Activated CD4-positive, alpha-beta T cell treated with anti-CD3 and anti-CD28 coated beads for 36 hours (primary cell): ENCODE measurements at regions of chr19 and their contacts with region 1.

Region 1: DNA sequence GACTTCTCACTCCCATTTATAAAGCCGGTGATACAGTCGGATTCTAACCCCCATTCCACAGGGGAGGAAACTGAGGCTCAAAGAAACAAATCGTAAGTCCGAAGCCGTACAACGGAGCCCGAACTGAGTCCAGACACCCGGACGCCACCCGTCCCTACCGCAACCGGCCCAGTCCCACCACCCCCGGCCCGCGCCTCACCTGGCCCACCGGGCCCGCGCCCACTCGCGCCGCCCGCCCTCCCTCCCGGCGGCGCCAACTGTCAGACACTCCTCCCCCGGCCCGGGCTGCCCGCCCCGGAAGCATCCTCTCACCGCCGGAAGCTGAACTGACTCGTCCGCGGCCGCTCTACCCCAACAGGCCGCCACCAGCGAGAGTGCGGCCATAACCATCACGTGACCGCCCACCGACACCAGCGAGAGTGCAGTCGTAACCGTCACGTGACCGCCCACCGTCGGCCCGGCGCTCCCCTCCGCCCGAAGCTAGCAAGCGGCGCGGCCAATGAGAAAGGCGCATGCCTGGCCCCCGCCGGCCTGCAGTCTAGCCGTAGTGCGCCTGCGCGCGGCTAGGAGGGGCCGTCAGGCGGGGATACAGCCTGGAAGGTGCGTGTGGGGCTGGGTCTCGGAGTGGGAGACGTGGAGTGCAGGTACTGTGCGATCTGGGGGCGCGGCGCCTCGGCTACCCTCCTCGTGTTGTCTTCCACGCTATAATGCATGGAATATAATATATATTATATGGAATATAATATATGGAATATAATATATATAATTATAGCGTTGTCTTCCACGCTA is at the starts of genes C19orf47 and PLD3:
- DNase-seq: peak; percentile 100
- ATAC-seq: peak; percentile 97
- H3K4me3 Mint-ChIP-seq: peak within 1 kb of the TSS; percentile 96
- H3K27ac Mint-ChIP-seq: peak within 1 kb of the TSS; percentile 91
- H3K4me1 Mint-ChIP-seq: peaks cover 26% of the 10 kb centered on the region
- H3K27me3 Mint-ChIP-seq: no peaks in the 10 kb centered on the region
- total RNA-seq, gene C19orf47: 15.8 to 17.7 TPM
- total RNA-seq, gene PLD3: 57.8 to 69.1 TPM

Region 2: GRCh38 chr19:39996811-39997594 is 351.3 kb before region 1 on chr19 and contains the start of gene ZNF546:
- CTCF ChIA-PET with region 1: no interaction called
- POLR2A ChIA-PET with region 1: no interaction called
- intact Hi-C with region 1: loop called in 1 of 2 experiments (anchors 2 kb)
- DNase-seq: peak; percentile 94
- ATAC-seq: peak; percentile 90
- H3K4me3 Mint-ChIP-seq: peak within 1 kb of the TSS; percentile 90
- H3K27ac Mint-ChIP-seq: peak within 1 kb of the TSS; percentile 99
- H3K4me1 Mint-ChIP-seq: peaks cover 48% of the 10 kb centered on the region
- H3K27me3 Mint-ChIP-seq: no peaks in the 10 kb centered on the region
- total RNA-seq, gene ZNF546: 6.3 to 6.9 TPM

Region 3: GRCh38 chr19:40365613-40366401 is 17.5 kb after region 1 on chr19:
- CTCF ChIA-PET with region 1: no interaction called
- POLR2A ChIA-PET with region 1: no interaction called
- intact Hi-C with region 1: loop called in 1 of 2 experiments (anchors 1 kb)
- DNase-seq: peak; percentile 79
- ATAC-seq: peak; percentile 97
- H3K4me3 Mint-ChIP-seq: peak overlapping the region; percentile 59
- H3K27ac Mint-ChIP-seq: no peak overlapping the region
- H3K4me1 Mint-ChIP-seq: peaks cover 13% of the 10 kb centered on the region
- H3K27me3 Mint-ChIP-seq: no peaks in the 10 kb centered on the region

Region 4: DNA sequence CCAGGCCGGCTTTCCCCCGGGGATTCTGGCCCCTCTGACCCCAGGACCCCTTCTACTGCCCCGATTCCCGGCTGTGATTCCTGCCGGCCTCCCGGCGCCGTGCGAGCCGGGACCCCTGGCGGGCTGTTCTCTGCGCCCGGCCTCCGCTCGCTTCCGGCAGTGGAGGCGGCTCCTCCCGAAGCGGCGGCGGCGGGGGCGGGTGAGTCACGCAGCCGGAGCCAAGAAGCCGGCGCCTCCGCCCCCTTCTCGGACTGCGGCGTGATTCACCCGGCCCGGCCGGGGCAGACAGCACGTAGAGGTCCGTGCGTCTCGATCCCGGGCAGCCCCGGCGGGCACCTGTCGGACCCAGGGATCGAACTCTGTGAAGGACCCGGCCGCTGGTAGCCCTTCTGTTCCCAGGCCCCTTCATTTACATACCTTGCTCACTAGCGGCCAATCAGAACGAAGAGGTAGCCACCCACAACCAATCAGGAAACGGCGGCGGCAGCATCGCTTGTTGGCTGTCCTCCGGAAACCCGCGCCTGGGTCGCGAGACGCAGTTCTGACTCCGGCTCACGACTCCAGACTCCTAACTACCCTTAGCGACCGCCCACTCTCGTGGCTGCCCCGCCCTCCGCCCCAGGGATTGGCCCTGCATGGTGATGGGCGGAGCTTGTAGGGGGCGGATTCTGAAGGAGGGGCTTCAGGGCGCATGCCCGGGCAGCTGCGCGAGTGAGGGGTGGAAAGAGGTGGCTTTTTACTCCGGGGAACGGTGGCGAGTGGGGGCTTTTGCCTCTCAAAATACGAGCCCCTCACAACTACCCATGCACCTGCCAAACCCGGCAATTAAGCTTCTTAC is 77.3 kb after region 1 on chr19 and contains the start of gene SERTAD1:
- CTCF ChIA-PET with region 1: no interaction called
- POLR2A ChIA-PET with region 1: no interaction called
- intact Hi-C with region 1: loop called in 1 of 2 experiments (anchors 1 kb)
- DNase-seq: peak; percentile 100
- ATAC-seq: peak; percentile 91
- H3K4me3 Mint-ChIP-seq: peak within 1 kb of the TSS; percentile 89
- H3K27ac Mint-ChIP-seq: peak within 1 kb of the TSS; percentile 96
- H3K4me1 Mint-ChIP-seq: peaks cover 20% of the 10 kb centered on the region
- H3K27me3 Mint-ChIP-seq: no peaks in the 10 kb centered on the region
- total RNA-seq, gene SERTAD1: 10.0 to 14.7 TPM

Region 5: DNA sequence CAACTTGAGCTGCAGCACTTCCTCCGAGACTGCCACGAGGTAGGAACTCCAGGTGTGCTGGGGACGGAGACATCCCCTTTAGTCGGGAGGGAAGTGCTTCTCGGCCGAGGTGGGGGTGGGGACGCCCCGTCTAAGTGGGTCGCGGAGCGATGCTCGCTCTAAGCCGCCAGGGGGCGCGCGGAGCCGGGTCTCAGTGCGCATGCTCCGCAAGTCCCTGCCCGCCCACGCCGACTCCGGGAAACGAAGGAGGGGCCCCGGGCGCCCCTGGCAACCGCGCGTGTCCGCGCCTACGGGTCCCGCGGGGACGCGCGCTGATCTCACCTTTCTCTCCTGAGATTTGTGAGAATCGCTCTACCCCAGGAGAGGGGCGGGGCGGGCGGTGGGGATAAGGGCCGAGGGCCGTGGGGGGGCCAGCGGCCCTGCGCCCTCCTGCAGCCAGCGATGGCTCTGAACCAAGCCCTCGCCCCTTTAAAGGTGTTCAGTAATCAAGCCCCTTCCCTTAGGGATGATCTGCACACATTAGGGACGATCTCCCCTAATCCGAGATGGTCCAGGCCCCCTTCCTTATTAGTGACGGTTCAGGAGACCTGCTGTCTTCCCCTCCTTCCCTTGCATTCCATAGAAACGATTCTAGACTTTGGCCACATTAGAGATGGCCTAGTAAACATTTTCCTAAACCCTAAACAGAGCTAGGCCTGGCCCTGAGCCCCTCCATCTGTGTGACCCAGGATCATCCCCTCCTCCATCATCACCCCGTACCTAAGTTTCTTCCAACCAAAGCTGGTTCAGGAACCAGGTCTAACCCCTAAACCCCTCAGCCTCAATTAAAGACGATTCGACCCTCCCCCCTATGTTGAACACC is 181.0 kb after region 1 on chr19:
- CTCF ChIA-PET with region 1: interaction called, 3 read pairs
- POLR2A ChIA-PET with region 1: no interaction called
- intact Hi-C with region 1: loop called in 1 of 2 experiments (anchors 1 kb)
- DNase-seq: peak; percentile 95
- ATAC-seq: peak; percentile 75
- H3K4me3 Mint-ChIP-seq: peak overlapping the region; percentile 47
- H3K27ac Mint-ChIP-seq: no peak overlapping the region
- H3K4me1 Mint-ChIP-seq: peaks cover 11% of the 10 kb centered on the region
- H3K27me3 Mint-ChIP-seq: peaks cover 19% of the 10 kb centered on the region

Region 6: GRCh38 chr19:40609561-40610395 is 261.5 kb after region 1 on chr19:
- CTCF ChIA-PET with region 1: no interaction called
- POLR2A ChIA-PET with region 1: no interaction called
- intact Hi-C with region 1: loop called in 1 of 2 experiments (anchors 2 kb)
- DNase-seq: peak; percentile 97
- ATAC-seq: peak; percentile 54
- H3K4me3 Mint-ChIP-seq: peak overlapping the region; percentile 69
- H3K27ac Mint-ChIP-seq: peak overlapping the region; percentile 97
- H3K4me1 Mint-ChIP-seq: peaks cover 63% of the 10 kb centered on the region
- H3K27me3 Mint-ChIP-seq: no peaks in the 10 kb centered on the region